ENCODE measurements at regions of chr1 and their contacts with region 1.

Region 1: GRCh38 chr1:18883636-18884418 is 18.5 kb downstream of the ALDH4A1 start:
- DNase-seq: peak; percentile 55 to 68 (median 58)
- H3K4me3 ChIP-seq: no peak overlapping the region
- H3K4me3 Mint-ChIP-seq: no peak overlapping the region
- H3K27ac ChIP-seq: no peak overlapping the region
- H3K27ac Mint-ChIP-seq: peak overlapping the region in 1 of 7 donors; percentile 38
- H3K4me1 ChIP-seq: no peaks in the 10 kb centered on the region
- H3K4me1 Mint-ChIP-seq: peaks cover 0 to 5% (median 0%) of the 10 kb centered on the region in 4 donors
- H3K27me3 ChIP-seq: no peaks in the 10 kb centered on the region
- H3K27me3 Mint-ChIP-seq: no peaks in the 10 kb centered on the region

Region 2: GRCh38 chr1:19096036-19096833 is 212.4 kb after region 1 on chr1:
- CTCF ChIA-PET with region 1: interaction called, 17 read pairs
- POLR2A ChIA-PET with region 1: no interaction called
- intact Hi-C with region 1: no loop called
- DNase-seq: peak in 3 of 5 donors; percentile 9 to 25 (median 15)
- H3K4me3 ChIP-seq: no peak overlapping the region
- H3K4me3 Mint-ChIP-seq: no peak overlapping the region
- H3K27ac ChIP-seq: no peak overlapping the region
- H3K27ac Mint-ChIP-seq: peak overlapping the region in 2 of 7 donors; percentile 7 to 69
- H3K4me1 ChIP-seq: no peaks in the 10 kb centered on the region
- H3K4me1 Mint-ChIP-seq: no peaks in the 10 kb centered on the region
- H3K27me3 ChIP-seq: no peaks in the 10 kb centered on the region
- H3K27me3 Mint-ChIP-seq: no peaks in the 10 kb centered on the region

Region 3: DNA sequence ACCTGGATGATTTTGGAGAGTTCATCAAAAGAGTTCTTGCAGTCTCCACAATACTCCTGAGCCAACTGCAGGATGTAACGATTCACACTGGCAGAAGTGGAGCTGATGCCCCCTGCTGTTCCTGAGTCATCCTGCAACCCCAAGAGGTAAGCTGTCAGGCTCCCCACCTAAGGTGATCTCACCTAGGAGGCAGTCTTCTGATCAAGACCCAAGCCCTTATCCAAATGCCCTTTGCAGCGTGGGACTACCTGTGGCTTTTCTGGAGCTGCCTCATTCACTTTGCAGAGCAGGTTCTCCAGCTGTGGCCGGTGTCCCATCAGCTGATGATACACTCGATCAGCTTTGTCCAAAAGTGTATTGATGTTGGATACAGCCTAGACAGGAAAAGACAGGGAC is 229.9 kb after region 1 on chr1:
- CTCF ChIA-PET with region 1: interaction called, 11 read pairs
- POLR2A ChIA-PET with region 1: no interaction called
- intact Hi-C with region 1: no loop called
- DNase-seq: peak; percentile 19 to 52 (median 25)
- H3K4me3 ChIP-seq: no peak overlapping the region
- H3K4me3 Mint-ChIP-seq: no peak overlapping the region
- H3K27ac ChIP-seq: no peak overlapping the region
- H3K27ac Mint-ChIP-seq: peak overlapping the region in 2 of 7 donors; percentile 24 to 61
- H3K4me1 ChIP-seq: no peaks in the 10 kb centered on the region
- H3K4me1 Mint-ChIP-seq: no peaks in the 10 kb centered on the region
- H3K27me3 ChIP-seq: no peaks in the 10 kb centered on the region
- H3K27me3 Mint-ChIP-seq: no peaks in the 10 kb centered on the region

Region 4: DNA sequence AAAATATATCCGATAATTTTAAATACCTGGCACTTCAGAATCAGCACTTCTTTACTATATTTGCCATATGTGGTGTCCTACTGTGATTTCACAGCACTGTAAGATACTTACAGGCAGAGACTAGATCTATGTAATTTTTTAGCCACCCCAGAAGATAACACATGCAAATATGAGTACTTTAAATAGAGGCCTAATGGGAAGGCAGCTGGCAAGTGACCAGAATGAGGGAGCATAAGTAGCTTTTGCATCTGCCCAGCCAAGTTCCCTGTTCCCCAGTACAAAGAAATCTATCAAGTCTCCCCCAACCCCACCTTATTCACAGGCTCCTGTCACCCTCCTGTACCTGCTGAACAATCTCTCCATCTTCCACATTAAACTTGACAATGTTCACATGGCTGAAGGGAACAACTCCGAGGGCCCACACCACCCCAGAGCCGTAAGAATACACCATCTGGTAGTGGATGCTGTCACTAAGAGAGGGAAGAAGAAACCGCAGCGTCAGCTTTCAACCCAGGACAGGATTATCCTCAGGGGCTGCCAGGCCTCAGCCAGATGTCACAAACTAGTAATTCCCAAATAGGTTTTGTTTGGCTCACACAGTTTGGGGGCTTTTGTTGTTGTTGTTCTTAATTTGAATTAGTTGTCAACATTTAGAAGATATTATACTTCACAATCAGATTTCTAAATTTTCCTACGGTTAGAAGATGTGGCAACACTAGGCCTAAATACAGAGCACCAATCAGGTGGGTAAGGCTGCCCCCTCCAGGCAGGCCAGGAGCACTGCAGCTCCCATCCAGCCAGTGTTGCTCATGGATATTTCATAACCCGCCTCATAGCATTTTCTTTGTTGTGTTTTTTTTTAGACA is 357.1 kb after region 1 on chr1:
- CTCF ChIA-PET with region 1: interaction called, 10 read pairs
- POLR2A ChIA-PET with region 1: no interaction called
- intact Hi-C with region 1: no loop called
- DNase-seq: peak; percentile 62 to 67 (median 65)
- H3K4me3 ChIP-seq: no peak overlapping the region
- H3K4me3 Mint-ChIP-seq: no peak overlapping the region
- H3K27ac ChIP-seq: no peak overlapping the region
- H3K27ac Mint-ChIP-seq: peak overlapping the region in 6 of 7 donors; percentile 36 to 91 (median 67)
- H3K4me1 ChIP-seq: no peaks in the 10 kb centered on the region
- H3K4me1 Mint-ChIP-seq: peaks cover 0 to 2% (median under 1%) of the 10 kb centered on the region in 4 donors
- H3K27me3 ChIP-seq: no peaks in the 10 kb centered on the region
- H3K27me3 Mint-ChIP-seq: no peaks in the 10 kb centered on the region